ENCODE measurements at regions of chr12 and their contacts with region 1.

Region 1: GRCh38 chr12:22334410-22335290 is at the start of gene ST8SIA1:
- DNase-seq: peak; percentile 69
- ATAC-seq: peak; percentile 35
- H3K4me3 Mint-ChIP-seq: peak within 1 kb of the TSS; percentile 79
- H3K27ac Mint-ChIP-seq: peak within 1 kb of the TSS; percentile 66
- H3K4me1 Mint-ChIP-seq: peaks cover 29% of the 10 kb centered on the region
- H3K27me3 Mint-ChIP-seq: peaks cover 11% of the 10 kb centered on the region
- total RNA-seq, gene ST8SIA1: 1.5 to 1.6 TPM

Region 2: DNA sequence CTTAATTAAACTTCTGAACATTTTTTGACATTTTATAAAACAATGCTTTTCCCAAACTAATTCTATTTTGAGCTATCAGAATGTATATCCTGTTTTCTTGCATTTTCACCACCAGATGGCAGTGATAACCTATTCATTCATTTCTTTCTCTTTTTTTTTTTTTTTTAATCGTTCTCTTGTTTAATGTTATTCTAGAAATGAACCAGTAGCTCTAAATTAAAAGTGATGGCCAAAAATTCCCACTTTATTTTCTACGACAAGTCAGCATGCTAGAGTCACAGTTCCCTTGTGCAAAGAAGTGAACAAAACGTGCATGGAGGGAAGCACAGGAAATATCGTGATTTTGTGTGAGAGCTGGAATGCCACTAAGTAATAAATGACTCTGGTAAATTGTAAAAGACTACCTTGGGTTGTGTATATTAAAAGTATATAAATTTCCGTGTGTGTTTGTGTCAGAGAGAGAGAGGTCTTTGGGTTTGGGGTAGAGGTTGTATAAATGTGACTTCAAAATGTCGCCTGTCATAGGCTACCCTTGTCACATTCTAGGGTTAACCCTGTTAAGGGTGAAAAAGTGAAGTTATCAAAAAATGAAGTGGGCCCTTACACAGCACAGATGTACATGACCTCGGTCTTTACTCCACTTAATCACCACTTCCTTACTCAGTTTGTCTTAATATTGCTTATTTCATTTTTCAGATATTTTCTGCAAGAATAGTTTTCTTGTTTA is 636.6 kb before region 1 on chr12:
- CTCF ChIA-PET with region 1: interaction called, 5 read pairs
- POLR2A ChIA-PET with region 1: no interaction called
- intact Hi-C with region 1: loop called (anchors 1 to 10 kb)
- DNase-seq: no peak
- ATAC-seq: no peak
- H3K4me3 Mint-ChIP-seq: no peak overlapping the region
- H3K27ac Mint-ChIP-seq: no peak overlapping the region
- H3K4me1 Mint-ChIP-seq: peaks cover 12% of the 10 kb centered on the region
- H3K27me3 Mint-ChIP-seq: no peaks in the 10 kb centered on the region

Region 3: GRCh38 chr12:22083167-22083566 is 251.5 kb before region 1 on chr12:
- CTCF ChIA-PET with region 1: interaction called, 5 read pairs
- POLR2A ChIA-PET with region 1: no interaction called
- intact Hi-C with region 1: loop called (anchors 1 to 5 kb)
- DNase-seq: peak; percentile 16
- ATAC-seq: no peak
- H3K4me3 Mint-ChIP-seq: no peak overlapping the region
- H3K27ac Mint-ChIP-seq: no peak overlapping the region
- H3K4me1 Mint-ChIP-seq: no peaks in the 10 kb centered on the region
- H3K27me3 Mint-ChIP-seq: no peaks in the 10 kb centered on the region

Region 4: DNA sequence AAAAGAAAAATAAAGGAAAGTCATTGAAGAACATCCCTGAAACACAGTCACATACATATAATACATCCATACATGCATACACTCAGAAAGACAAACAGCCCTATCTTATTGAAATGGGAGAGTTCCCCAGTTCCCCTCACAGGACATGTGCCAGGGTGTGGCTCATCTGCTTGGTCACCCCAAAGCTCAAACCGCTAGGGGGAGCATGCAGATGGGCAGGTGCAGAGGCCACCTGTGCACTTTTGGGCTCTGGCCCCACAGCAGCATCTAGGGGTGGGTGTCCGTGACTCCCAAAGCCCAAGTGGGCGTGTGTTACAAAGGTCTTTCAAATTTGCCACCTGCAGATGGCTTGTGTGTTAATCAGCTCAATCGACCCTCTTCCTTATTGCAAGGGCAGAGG is 213.4 kb before region 1 on chr12:
- CTCF ChIA-PET with region 1: interaction called, 4 read pairs
- POLR2A ChIA-PET with region 1: no interaction called
- intact Hi-C with region 1: loop called in 1 of 2 experiments (anchors 1 kb)
- DNase-seq: peak; percentile 65
- ATAC-seq: peak; percentile 60
- H3K4me3 Mint-ChIP-seq: no peak overlapping the region
- H3K27ac Mint-ChIP-seq: no peak overlapping the region
- H3K4me1 Mint-ChIP-seq: peaks cover 4% of the 10 kb centered on the region
- H3K27me3 Mint-ChIP-seq: no peaks in the 10 kb centered on the region

Region 5: DNA sequence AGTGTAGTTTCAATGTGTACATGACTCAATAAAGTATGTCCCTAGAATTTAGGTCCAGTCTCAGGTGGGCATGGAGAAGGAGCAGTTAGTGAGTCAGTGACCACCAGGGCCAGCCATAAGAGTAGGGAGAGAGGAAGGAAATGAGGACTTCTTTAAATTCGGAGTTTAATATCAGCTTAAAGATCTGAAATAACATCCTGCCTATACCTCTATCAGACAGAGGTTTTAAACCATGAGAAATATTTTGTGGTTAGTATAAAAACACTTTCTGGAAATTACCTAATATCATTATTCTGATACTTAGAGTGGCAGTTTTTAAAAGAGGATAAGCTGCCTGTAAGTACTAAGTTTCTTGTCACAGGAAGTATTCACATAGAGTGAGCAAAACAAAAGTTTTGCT is 61.6 kb after region 1 on chr12:
- CTCF ChIA-PET with region 1: interaction called, 9 read pairs
- POLR2A ChIA-PET with region 1: interaction called, 3 read pairs
- intact Hi-C with region 1: loop called in 1 of 2 experiments (anchors 5 kb)
- DNase-seq: no peak
- ATAC-seq: peak; percentile 43
- H3K4me3 Mint-ChIP-seq: peak overlapping the region; percentile 46
- H3K27ac Mint-ChIP-seq: peak overlapping the region; percentile 77
- H3K4me1 Mint-ChIP-seq: peaks cover 39% of the 10 kb centered on the region
- H3K27me3 Mint-ChIP-seq: no peaks in the 10 kb centered on the region

Region 6: DNA sequence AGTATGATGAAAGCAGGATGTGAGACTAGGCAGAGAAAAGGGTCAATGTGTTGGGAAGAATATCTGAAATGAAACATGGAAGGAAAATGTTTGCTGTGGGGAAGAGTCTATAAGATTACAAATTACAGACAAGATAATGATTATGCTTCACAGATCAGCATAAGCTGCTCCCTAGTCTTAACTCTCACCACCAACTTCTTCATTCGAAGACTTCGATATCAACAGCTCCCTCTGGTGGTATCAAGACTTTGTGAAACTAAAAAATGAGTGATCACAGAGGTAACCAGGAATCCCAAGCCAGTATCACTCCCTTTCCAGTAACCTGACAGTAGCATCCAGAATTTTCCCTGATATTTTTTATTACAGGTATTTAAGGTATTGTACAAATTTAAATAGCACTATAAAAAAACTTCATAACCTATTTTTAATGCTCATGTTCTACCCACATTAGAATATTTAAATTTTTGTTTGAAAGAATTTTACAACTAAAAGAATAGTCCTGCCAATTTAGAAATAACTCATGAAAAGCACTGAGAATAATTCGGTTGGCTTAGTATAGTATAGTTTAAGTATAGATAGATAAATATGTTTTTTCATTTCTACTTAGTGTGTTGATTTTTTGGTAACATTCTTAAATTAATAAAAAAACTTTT is 125.3 kb after region 1 on chr12:
- CTCF ChIA-PET with region 1: interaction called, 13 read pairs
- POLR2A ChIA-PET with region 1: no interaction called
- intact Hi-C with region 1: no loop called
- DNase-seq: no peak
- ATAC-seq: peak; percentile 64
- H3K4me3 Mint-ChIP-seq: no peak overlapping the region
- H3K27ac Mint-ChIP-seq: no peak overlapping the region
- H3K4me1 Mint-ChIP-seq: no peaks in the 10 kb centered on the region
- H3K27me3 Mint-ChIP-seq: no peaks in the 10 kb centered on the region